ENCODE measurements at regions of chr5 and their contacts with region 1.

Region 1: GRCh38 chr5:157290981-157291711 is 25.2 kb downstream of the CYFIP2 start:
- DNase-seq: peak; percentile 71
- H3K4me3 Mint-ChIP-seq: no peak overlapping the region
- H3K27ac Mint-ChIP-seq: peak overlapping the region; percentile 68
- H3K4me1 Mint-ChIP-seq: peaks cover 79% of the 10 kb centered on the region
- H3K27me3 Mint-ChIP-seq: no peaks in the 10 kb centered on the region

Region 2: DNA sequence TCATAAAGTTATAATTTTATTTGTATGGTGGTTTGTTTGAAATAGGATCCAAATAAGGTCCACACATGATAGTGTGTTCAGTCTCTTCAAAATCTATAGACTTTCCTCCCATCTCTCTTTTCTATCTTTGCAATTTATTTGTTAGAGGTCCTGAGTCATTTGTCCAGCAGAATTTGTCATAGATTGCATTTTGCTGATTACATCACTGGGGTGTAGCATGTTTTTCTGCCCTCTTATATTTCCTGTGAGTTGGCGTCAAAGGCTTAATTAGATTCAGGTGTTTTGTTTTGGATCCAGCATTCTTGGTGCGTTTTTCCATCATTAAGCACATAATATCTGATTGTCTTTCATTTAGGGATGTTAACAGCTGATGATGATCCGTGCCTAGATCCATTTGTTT is 10.2 kb before region 1 on chr5:
- CTCF ChIA-PET with region 1: no interaction called
- intact Hi-C with region 1: loop called (anchors 1 kb)
- DNase-seq: peak; percentile 3
- H3K4me3 Mint-ChIP-seq: peak overlapping the region; percentile 8
- H3K27ac Mint-ChIP-seq: peak overlapping the region; percentile 90
- H3K4me1 Mint-ChIP-seq: peaks cover 92% of the 10 kb centered on the region
- H3K27me3 Mint-ChIP-seq: no peaks in the 10 kb centered on the region

Region 3: DNA sequence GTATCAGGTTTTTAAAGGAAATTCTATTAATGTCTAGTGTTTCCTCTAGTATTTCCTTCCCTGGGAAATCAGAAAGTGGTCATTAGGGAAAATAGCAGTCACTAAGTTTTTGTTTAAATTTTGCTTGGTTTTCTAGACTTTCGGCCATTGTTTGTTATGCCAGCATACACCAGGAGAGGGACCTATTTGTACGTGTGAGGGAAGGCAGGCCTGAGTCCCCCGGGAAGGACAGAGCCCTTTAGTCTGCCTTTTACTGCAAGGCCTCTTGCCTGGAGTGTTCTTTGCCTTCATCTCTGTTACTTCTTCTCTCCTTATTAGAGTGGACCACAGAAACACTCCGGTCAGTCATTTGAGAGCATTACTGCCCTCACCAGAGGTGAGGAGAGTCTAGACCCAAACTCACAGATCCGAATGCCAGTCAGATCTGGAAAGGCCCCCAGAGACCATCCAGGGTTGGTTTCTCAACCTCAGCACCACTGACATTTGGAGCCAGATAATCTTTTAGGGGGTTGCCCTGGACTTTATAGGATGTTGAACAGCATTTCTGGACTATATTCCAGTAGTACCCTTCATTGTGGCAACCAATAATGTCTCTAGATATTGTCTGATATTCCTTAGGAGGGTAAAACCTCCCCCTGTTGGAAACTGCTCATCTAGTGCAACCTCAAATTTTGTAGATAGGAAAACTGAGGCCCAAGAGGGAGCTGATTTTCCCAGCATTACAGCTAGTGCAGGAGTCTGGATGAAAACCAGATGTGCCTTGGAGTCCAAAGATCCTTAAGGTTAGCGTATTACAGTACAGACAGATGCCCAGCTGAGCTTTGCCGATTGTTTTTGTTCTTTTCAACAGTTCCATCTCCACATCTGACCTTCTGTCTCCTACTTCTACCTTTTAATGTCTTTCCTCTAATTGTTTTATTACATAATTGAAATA is 75.9 kb after region 1 on chr5:
- CTCF ChIA-PET with region 1: no interaction called
- intact Hi-C with region 1: no loop called
- DNase-seq: no peak
- H3K4me3 Mint-ChIP-seq: no peak overlapping the region
- H3K27ac Mint-ChIP-seq: peak overlapping the region; percentile 24
- H3K4me1 Mint-ChIP-seq: peaks cover 25% of the 10 kb centered on the region
- H3K27me3 Mint-ChIP-seq: no peaks in the 10 kb centered on the region

Region 4: GRCh38 chr5:157494178-157494832 is 203.2 kb after region 1 on chr5:
- CTCF ChIA-PET with region 1: no interaction called
- intact Hi-C with region 1: no loop called
- DNase-seq: no peak
- H3K4me3 Mint-ChIP-seq: no peak overlapping the region
- H3K27ac Mint-ChIP-seq: no peak overlapping the region
- H3K4me1 Mint-ChIP-seq: no peaks in the 10 kb centered on the region
- H3K27me3 Mint-ChIP-seq: no peaks in the 10 kb centered on the region

Region 5: GRCh38 chr5:157677931-157678330 is 386.8 kb after region 1 on chr5:
- CTCF ChIA-PET with region 1: no interaction called
- intact Hi-C with region 1: no loop called
- DNase-seq: no peak
- H3K4me3 Mint-ChIP-seq: no peak overlapping the region
- H3K27ac Mint-ChIP-seq: no peak overlapping the region
- H3K4me1 Mint-ChIP-seq: no peaks in the 10 kb centered on the region
- H3K27me3 Mint-ChIP-seq: no peaks in the 10 kb centered on the region

Region 6: GRCh38 chr5:157761690-157762621 is 470.8 kb after region 1 on chr5:
- CTCF ChIA-PET with region 1: no interaction called
- intact Hi-C with region 1: no loop called
- DNase-seq: peak; percentile 35
- H3K4me3 Mint-ChIP-seq: no peak overlapping the region
- H3K27ac Mint-ChIP-seq: no peak overlapping the region
- H3K4me1 Mint-ChIP-seq: peaks cover 7% of the 10 kb centered on the region
- H3K27me3 Mint-ChIP-seq: no peaks in the 10 kb centered on the region